ENCODE measurements at regions of chr17 and their contacts with region 1.

Region 1: GRCh38 chr17:66567234-66568170 is 265.1 kb downstream of the PRKCA start:
- DNase-seq: peak; percentile 83
- H3K4me3 Mint-ChIP-seq: no peak overlapping the region
- H3K27ac Mint-ChIP-seq: peak overlapping the region; percentile 66
- H3K4me1 Mint-ChIP-seq: peaks cover 11% of the 10 kb centered on the region
- H3K27me3 Mint-ChIP-seq: no peaks in the 10 kb centered on the region
- CTCF ChIP-seq: peak; percentile 90

Region 2: GRCh38 chr17:66255112-66255511 is 312.4 kb before region 1 on chr17:
- CTCF ChIA-PET with region 1: interaction called, 5 read pairs
- POLR2A ChIA-PET with region 1: interaction called, 3 read pairs
- intact Hi-C with region 1: loop called (anchors 1 kb)
- DNase-seq: peak; percentile 82
- H3K4me3 Mint-ChIP-seq: no peak overlapping the region
- H3K27ac Mint-ChIP-seq: no peak overlapping the region
- H3K4me1 Mint-ChIP-seq: no peaks in the 10 kb centered on the region
- H3K27me3 Mint-ChIP-seq: no peaks in the 10 kb centered on the region
- CTCF ChIP-seq: peak; percentile 72

Region 3: DNA sequence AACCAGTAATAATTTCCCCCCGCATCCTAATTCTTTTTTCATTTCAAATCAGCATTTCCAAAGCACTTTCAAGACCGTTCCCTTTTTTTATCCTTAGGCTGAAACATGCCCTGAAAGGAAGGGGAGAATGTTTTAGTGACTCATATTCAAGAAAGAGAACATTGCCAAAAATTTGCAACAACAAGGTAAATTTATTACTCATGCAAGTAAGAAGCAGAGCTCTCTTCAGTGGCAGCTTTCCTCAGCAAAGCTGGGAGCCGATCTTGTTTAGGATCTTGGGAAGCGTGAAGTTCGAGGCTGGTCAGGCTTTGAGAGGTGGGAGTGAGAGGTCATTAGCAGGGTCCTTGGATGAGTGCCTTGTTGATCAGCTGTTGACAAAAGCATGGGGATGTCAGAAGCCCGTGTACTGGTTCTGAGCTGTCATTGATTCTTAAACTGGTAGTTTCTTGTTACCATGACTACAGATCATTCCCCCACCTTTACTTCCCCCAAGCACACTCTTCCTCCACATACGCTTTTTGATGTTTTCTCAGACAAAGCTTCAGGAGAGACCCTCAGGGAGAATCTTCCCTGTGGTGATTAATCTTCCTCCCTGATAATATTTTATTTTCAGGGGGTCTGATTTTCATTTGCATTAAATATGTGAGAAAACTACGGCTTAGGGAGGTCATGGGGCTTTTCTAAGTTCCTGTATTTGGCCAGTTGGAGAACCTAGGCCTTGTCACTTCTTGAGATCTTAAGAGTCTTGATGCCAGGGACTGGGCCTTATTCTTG is 135.4 kb before region 1 on chr17:
- CTCF ChIA-PET with region 1: no interaction called
- POLR2A ChIA-PET with region 1: no interaction called
- intact Hi-C with region 1: loop called (anchors 10 kb)
- DNase-seq: peak; percentile 80
- H3K4me3 Mint-ChIP-seq: peak overlapping the region; percentile 67
- H3K27ac Mint-ChIP-seq: peak overlapping the region; percentile 95
- H3K4me1 Mint-ChIP-seq: peaks cover 20% of the 10 kb centered on the region
- H3K27me3 Mint-ChIP-seq: no peaks in the 10 kb centered on the region
- CTCF ChIP-seq: no peak

Region 4: DNA sequence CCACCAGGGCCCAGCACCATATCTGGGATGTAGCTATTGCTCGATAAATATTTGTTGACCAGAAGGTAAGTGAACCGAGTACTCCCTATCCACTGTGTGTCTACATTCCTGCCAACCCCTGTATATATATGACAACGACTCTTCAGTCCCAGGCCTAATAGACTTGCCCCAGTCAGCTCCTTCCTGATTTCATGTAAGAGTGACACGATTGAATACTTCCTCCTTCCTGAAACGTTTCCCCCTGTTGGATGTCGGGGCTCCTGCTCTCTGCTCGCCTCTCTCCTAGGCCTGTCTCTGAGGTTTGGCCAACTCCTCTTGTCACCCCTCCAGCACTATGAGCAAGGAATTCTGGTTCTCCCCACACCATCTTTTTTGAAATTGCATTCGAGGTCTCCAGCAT is 86.2 kb before region 1 on chr17:
- CTCF ChIA-PET with region 1: no interaction called
- POLR2A ChIA-PET with region 1: no interaction called
- intact Hi-C with region 1: no loop called
- DNase-seq: no peak
- H3K4me3 Mint-ChIP-seq: no peak overlapping the region
- H3K27ac Mint-ChIP-seq: no peak overlapping the region
- H3K4me1 Mint-ChIP-seq: no peaks in the 10 kb centered on the region
- H3K27me3 Mint-ChIP-seq: no peaks in the 10 kb centered on the region
- CTCF ChIP-seq: no peak

Region 5: DNA sequence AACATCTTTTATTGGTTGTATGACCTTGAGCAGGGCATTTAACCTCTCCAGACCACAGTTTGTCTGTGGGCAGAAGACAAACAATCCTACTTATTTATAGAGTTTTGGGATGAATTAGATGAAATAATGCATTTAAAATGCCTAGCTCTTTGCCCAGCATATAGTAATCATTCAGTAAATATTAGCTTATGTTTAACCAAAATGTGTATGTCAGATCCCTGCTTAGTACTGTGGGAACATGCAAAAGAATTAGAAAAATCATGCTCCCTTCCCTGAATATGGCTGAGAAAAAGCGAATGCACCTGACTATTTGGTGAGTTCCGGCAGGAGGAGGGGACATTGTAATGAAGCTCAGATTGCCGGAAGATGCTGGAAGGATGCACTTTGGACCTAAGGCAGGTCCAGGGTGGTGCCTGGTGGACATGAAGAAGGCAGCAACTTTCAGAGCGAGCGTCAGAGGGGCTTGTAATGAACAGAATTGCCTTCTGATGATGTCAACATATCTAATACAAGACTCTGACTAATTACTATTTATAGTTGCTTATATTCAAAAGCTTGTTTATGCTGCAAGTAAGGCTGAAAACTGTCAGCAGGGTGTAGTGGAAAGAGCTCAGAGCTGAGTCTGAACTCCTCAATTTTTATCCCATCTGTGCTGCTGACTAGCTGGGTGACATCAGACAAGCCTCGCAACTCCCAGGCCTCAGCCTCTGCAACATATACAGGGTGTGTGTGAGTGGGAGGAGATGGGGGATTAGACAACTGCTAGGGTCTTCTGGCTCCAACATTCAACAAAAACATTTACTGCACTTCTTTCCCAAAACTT is 43.9 kb before region 1 on chr17:
- CTCF ChIA-PET with region 1: no interaction called
- POLR2A ChIA-PET with region 1: no interaction called
- intact Hi-C with region 1: no loop called
- DNase-seq: no peak
- H3K4me3 Mint-ChIP-seq: no peak overlapping the region
- H3K27ac Mint-ChIP-seq: no peak overlapping the region
- H3K4me1 Mint-ChIP-seq: peaks cover 13% of the 10 kb centered on the region
- H3K27me3 Mint-ChIP-seq: no peaks in the 10 kb centered on the region
- CTCF ChIP-seq: no peak

Region 6: DNA sequence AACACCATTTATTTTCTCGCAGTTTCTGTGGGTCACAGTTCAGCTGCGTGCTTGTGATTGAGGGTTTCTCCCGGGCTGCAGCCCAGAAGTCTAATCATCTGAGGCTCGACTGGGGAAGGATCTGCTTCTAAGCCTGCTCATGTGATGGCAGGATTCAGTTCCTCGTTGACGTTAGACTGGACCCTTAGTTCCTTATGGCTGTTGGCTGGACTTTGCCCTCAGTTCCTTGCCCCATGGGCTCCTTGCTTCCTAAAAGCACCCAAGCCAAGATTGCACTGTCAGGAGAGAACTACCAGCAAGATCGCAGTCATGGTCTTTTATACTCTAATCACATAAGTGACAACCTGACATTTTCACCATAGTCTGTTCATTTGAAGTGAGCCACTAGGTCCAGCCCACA is 15.1 kb before region 1 on chr17:
- CTCF ChIA-PET with region 1: interaction called, 12 read pairs
- POLR2A ChIA-PET with region 1: interaction called, 3 read pairs
- intact Hi-C with region 1: no loop called
- DNase-seq: no peak
- H3K4me3 Mint-ChIP-seq: no peak overlapping the region
- H3K27ac Mint-ChIP-seq: no peak overlapping the region
- H3K4me1 Mint-ChIP-seq: peaks cover 6% of the 10 kb centered on the region
- H3K27me3 Mint-ChIP-seq: no peaks in the 10 kb centered on the region
- CTCF ChIP-seq: no peak

Measured in MCF 10A (cell line).